ENCODE measurements at regions of chr5 and their contacts with region 1.

Region 1: DNA sequence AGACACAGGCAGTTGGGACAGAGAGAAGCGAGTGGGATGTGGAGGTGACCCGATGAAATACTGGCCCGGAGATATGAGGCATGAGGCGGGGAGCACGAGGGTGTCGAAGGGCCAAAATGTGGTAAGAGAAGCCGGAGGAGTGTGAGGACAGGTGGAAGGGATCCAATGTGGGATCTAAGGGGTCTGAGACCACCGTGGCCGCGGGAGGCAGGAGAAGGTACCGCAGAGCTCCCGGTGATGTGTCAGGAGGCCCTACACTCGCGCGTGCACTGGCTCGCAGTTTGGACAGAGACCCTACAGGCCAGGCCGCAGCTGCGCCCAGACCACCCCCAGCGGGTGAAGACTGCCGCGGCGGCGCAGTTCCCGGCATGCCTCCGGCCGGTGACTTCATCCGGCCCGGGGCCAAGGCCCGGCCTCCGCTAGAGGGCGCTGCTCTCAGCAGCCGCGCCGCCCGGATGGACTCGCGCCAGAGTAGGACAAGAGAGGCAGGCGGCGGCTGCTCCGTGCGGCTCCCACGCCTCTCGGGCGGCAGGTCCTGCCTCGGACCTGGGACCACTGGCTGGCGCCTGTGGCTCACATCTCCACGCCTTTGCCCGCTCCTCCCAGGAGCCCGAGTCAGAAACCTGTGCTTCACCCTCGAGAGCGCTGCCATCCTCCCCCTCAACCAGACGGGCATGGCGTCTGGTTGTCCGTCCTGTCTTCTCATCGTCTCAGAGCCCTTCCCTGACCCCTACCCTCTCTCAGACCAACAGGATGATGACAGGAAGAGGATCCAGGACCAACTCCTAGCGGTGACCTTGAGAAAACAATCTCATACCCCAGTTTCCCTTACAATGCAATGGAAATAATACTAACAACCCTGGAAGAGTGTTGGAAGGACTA is 35.4 kb upstream of the STING1 start:
- DNase-seq: peak; percentile 73
- H3K4me3 ChIP-seq: peak overlapping the region; percentile 67 to 74 (median 70)
- H3K27ac ChIP-seq: peak overlapping the region; percentile 39
- H3K4me1 ChIP-seq: peaks cover 21% of the 10 kb centered on the region
- H3K27me3 ChIP-seq: no peaks in the 10 kb centered on the region
- CTCF ChIP-seq: peak; percentile 75 to 98

Region 2: DNA sequence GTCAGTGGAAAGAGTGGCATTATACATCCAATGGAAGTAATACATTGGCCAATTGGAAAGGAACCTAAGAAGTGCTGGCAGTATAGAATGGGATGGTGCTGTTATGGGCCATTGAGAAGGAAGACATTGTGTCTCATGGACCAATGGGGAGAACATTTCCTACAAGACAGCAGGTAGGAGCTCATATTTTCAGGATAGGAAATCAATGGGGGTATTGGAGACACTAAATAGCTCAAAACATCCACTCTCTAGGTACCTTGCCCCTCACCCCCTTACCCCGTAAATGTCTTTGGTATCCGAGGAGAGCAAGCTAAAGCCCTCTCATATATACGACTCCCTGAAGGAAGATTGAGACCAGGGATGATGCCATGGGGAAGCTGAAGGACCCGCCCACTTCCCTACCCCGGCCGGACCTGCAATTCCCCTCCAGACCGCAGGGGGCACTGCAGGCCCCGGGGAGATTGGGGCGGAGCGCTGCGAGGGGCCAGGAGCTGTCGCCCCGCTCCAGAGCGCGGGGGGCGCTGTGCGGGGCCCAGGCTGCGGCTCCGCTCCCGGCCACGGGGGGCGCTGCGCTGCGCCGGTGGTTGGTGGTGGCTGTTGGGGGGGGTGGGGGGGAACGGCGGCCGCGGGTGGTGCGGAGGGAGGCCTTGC is 1165.7 kb before region 1 on chr5 and contains the start of gene KDM3B:
- CTCF ChIA-PET with region 1: interaction called, 19 read pairs
- dilution Hi-C with region 1: no loop called
- in situ Hi-C with region 1: no loop called
- intact Hi-C with region 1: no loop called
- DNase-seq: peak; percentile 81
- H3K4me3 ChIP-seq: peak within 1 kb of the TSS; percentile 77 to 83 (median 82)
- H3K27ac ChIP-seq: peak within 1 kb of the TSS; percentile 65
- H3K4me1 ChIP-seq: peaks cover 18% of the 10 kb centered on the region
- H3K27me3 ChIP-seq: no peaks in the 10 kb centered on the region
- CTCF ChIP-seq: peak; percentile 98
- total RNA-seq, gene KDM3B: 35.6 to 42.7 TPM

Region 3: DNA sequence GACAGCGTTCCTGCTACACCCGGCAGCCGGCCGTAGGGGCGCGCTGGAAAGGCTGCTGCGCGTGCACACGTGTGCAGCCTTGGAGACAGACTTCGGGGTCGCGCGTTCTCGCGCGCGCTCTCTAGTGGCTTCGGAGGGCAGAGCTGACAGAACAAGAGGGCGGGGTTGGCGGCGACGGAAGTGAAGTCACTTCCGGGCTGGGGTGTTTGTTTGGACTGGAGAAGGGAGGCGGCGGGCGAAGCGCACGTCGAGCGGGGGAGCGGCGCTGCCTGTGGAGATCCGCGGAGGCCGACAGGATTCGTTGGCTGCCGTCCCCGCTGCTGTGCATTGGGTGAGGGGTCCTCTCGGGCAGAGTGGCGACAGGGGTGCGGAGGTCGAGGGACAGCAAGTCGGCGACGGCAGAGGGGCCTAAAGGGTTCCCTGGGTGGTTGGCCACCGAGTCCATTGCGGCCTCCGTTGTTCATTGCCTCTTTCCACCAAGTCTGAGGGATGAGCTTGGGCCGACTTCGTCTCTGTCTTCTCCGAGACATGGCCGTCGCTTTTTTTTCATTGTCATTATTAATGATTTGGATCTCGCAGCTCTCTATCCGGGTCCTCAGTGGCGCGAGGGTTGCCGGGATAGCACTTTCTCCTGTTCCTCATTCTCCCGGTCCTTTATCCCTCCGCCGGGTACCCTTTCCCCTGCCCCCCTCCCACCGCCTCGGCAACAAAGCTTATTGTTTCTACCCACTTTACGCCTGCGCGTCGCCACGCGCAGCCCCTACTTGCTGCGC is 176.1 kb before region 1 on chr5 and contains the start of gene PAIP2:
- CTCF ChIA-PET with region 1: no interaction called
- dilution Hi-C with region 1: no loop called
- in situ Hi-C with region 1: no loop called
- intact Hi-C with region 1: loop called (anchors 2 kb)
- DNase-seq: peak; percentile 96
- H3K4me3 ChIP-seq: peak within 1 kb of the TSS; percentile 85 to 92 (median 86)
- H3K27ac ChIP-seq: peak within 1 kb of the TSS; percentile 91
- H3K4me1 ChIP-seq: peaks cover 19% of the 10 kb centered on the region
- H3K27me3 ChIP-seq: no peaks in the 10 kb centered on the region
- CTCF ChIP-seq: peak; percentile 51 to 81
- total RNA-seq, gene PAIP2: 38.0 to 43.6 TPM

Region 4: GRCh38 chr5:139458580-139459406 is 59.1 kb before region 1 on chr5:
- CTCF ChIA-PET with region 1: no interaction called
- dilution Hi-C with region 1: no loop called
- in situ Hi-C with region 1: no loop called
- intact Hi-C with region 1: no loop called
- DNase-seq: peak; percentile 73
- H3K4me3 ChIP-seq: no peak overlapping the region
- H3K27ac ChIP-seq: no peak overlapping the region
- H3K4me1 ChIP-seq: peaks cover 8% of the 10 kb centered on the region
- H3K27me3 ChIP-seq: no peaks in the 10 kb centered on the region
- CTCF ChIP-seq: no peak

Region 5: GRCh38 chr5:139482050-139482889 is 35.7 kb before region 1 on chr5 and contains the start of gene STING1:
- CTCF ChIA-PET with region 1: interaction called, 5 read pairs
- dilution Hi-C with region 1: no loop called
- in situ Hi-C with region 1: no loop called
- intact Hi-C with region 1: loop called (anchors 1 kb)
- DNase-seq: peak; percentile 97
- H3K4me3 ChIP-seq: peak within 1 kb of the TSS; percentile 19 to 44 (median 37)
- H3K27ac ChIP-seq: peak within 1 kb of the TSS; percentile 58
- H3K4me1 ChIP-seq: peaks cover 22% of the 10 kb centered on the region
- H3K27me3 ChIP-seq: no peaks in the 10 kb centered on the region
- CTCF ChIP-seq: no peak
- total RNA-seq, gene STING1: 10.7 to 36.6 TPM

Region 6: GRCh38 chr5:139690064-139690802 is 172.3 kb after region 1 on chr5:
- CTCF ChIA-PET with region 1: no interaction called
- dilution Hi-C with region 1: no loop called
- in situ Hi-C with region 1: no loop called
- intact Hi-C with region 1: loop called (anchors 1 kb)
- DNase-seq: peak; percentile 28
- H3K4me3 ChIP-seq: no peak overlapping the region
- H3K27ac ChIP-seq: no peak overlapping the region
- H3K4me1 ChIP-seq: peaks cover under 1% of the 10 kb centered on the region
- H3K27me3 ChIP-seq: no peaks in the 10 kb centered on the region
- CTCF ChIP-seq: peak; percentile 59 to 64

Measured in mammary epithelial cell (primary cell).